ENCODE measurements at regions of chr7 and their contacts with region 1.

Region 1: DNA sequence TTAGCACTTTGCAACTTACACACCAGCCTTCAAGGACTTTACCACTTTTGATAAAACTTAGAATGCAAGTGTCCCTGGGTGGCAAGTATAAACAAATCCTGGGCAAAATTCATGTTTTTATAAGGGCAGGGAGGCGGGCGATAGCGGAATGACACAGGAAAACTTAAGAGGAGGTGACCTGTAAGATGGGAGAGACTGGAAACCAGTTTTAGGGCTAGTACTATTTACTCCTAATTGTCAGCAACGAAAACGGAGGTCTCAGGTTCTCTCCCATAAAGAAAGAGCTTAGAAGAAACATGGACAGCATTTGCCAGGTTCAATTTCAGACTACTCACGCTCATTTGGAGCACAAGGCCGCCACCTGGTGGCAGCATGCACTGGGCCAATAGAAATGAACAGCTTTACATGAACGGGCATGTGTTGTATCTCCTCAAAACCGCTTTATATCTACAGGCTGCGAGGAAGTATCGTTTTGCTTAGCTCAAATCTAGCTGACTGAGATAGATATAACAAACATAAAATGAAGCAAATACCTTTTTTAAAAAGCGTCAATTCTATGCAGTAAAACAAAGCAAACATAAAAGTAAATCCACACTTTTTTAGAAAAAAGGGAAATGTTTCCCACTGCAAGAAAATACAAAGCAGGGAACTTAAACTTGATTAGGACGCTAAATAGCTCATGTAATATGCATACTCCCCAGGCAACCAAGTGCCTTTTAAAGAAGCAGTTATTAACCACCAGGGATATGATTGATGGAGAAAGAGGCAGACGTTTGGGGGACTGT is 37.6 kb upstream of the SVOPL start:
- DNase-seq: peak; percentile 66 to 92 (median 84)
- ATAC-seq: peak; percentile 93 to 99 (median 99)
- H3K4me3 ChIP-seq: no peak overlapping the region
- H3K27ac ChIP-seq: no peak overlapping the region
- H3K4me1 ChIP-seq: no peaks in the 10 kb centered on the region
- H3K27me3 ChIP-seq: no peaks in the 10 kb centered on the region
- CTCF ChIP-seq: peak; percentile 66 to 92 (median 82)

Region 2: DNA sequence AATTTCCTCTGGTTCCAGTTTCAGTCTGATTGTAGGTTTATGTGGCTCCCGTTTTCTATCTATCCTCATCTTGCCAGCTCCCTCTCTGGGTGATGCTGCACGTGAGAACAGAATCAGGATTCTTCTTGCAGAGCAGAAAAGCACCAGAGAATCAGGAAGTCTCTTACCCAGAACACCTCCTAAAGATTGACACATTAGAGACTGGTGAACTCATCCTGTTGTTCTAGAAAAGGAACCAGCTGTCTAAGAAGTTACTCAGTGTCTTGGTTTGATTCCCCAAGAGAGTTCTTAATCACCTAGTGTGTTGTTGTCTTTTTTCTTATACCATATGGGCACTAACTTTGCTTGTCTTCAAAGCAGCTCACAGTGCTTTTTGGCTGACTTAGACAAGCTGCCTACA is 1044.3 kb before region 1 on chr7:
- intact Hi-C with region 1: no loop called
- DNase-seq: no peak
- ATAC-seq: no peak
- H3K4me3 ChIP-seq: no peak overlapping the region
- H3K27ac ChIP-seq: no peak overlapping the region
- H3K4me1 ChIP-seq: no peaks in the 10 kb centered on the region
- H3K27me3 ChIP-seq: no peaks in the 10 kb centered on the region
- CTCF ChIP-seq: no peak

Region 3: DNA sequence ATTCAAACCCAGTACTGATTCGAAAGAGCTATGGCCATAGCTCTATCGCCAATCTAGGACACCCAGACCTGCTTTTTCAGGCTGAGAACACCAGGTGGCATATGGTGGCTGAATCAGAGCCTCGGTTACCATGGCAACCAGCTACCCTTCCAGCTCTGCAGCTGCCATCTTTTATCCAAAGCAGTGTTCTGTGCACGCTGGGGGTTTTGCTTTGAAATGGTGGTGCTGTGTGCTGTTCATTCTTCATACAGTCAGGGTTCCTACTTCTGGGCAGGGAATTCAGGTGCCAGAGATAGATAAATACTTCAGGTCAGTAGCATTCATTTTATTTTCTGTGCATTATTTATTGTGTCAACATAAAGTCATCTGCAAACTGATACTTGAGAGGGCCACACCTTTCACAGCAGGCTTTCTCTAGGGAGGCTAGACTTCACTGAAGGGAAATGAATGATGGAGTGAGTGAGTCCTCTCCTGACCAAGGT is 577.1 kb before region 1 on chr7:
- intact Hi-C with region 1: loop called in 1 of 3 experiments (anchors 10 kb)
- DNase-seq: peak; percentile 54 to 90 (median 84)
- ATAC-seq: peak; percentile 99 to 100 (median 100)
- H3K4me3 ChIP-seq: no peak overlapping the region
- H3K27ac ChIP-seq: no peak overlapping the region
- H3K4me1 ChIP-seq: no peaks in the 10 kb centered on the region
- H3K27me3 ChIP-seq: no peaks in the 10 kb centered on the region
- CTCF ChIP-seq: peak; percentile 30 to 50 (median 30)

Region 4: GRCh38 chr7:138602451-138602850 is 136.3 kb before region 1 on chr7:
- intact Hi-C with region 1: no loop called
- DNase-seq: no peak
- ATAC-seq: no peak
- H3K4me3 ChIP-seq: no peak overlapping the region
- H3K27ac ChIP-seq: no peak overlapping the region
- H3K4me1 ChIP-seq: peaks cover 0 to 2% (median 0%) of the 10 kb centered on the region in 3 donors
- H3K27me3 ChIP-seq: no peaks in the 10 kb centered on the region
- CTCF ChIP-seq: no peak

Measured in pancreas (tissue), 10 donors.